Aorta (tissue), 5 donors: ENCODE measurements at regions of chr15 and their contacts with region 1.

Region 1: GRCh38 chr15:34855397-34855796 is 60.0 kb upstream of the ACTC1 start:
- DNase-seq: no peak
- ATAC-seq: peak; percentile 67
- H3K4me3 ChIP-seq: no peak overlapping the region
- H3K27ac ChIP-seq: no peak overlapping the region
- H3K4me1 ChIP-seq: peaks cover 4 to 10% of the 10 kb centered on the region in 2 donors
- H3K27me3 ChIP-seq: no peaks in the 10 kb centered on the region

Region 2: DNA sequence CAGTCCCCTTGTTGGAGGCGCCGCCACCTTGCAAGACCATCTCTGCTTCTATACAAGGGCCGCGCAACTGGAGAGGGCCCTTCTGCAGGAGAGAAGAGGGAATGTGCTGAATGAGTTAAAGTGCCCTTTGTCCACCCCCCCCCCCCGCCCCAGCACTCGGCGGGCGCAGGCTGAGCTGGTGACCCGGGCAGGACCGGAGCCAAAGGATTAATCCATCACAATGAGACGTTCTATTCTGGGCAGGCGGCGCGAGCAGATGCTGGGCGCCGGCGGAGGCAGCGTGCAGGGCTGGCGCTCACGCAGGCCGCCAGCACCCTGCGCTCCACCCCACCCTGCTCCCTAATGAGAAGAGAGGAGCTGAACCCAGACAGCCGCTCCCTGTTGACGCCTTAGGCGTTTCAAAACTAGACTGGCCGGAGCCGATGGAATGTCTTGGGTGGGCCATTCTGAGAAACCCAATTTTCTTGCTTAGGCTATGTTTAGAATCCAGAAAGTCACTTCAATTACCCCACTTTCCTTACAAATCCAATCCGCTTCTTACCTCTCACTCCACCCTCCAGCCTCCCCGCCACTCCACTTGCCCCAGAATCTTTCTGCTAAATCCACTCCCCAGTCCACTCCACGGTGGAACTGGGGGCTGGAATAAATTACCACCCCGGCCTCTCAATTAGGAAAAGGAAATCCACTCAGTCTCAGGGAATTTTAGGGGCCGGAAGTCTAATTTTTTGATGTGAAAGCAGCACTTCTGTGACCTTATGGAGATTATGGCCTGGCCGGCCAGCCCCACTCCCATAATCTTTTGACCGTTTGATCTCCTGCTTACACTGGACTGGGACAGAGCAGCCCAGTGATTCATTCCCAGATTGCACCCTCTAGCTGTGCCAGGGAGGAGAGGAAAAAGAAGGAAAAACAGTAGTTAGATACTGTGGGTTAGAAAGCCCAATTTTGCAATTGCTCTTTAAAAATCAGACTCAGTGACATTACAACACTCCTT is 133.3 kb before region 1 on chr15:
- intact Hi-C with region 1: loop called in 1 of 2 experiments (anchors 5 kb)
- DNase-seq: peak; percentile 84 to 92
- ATAC-seq: peak; percentile 93
- H3K4me3 ChIP-seq: no peak overlapping the region
- H3K27ac ChIP-seq: peak overlapping the region; percentile 10 to 63
- H3K4me1 ChIP-seq: peaks cover 2 to 15% of the 10 kb centered on the region in 2 donors
- H3K27me3 ChIP-seq: no peaks in the 10 kb centered on the region

Region 3: DNA sequence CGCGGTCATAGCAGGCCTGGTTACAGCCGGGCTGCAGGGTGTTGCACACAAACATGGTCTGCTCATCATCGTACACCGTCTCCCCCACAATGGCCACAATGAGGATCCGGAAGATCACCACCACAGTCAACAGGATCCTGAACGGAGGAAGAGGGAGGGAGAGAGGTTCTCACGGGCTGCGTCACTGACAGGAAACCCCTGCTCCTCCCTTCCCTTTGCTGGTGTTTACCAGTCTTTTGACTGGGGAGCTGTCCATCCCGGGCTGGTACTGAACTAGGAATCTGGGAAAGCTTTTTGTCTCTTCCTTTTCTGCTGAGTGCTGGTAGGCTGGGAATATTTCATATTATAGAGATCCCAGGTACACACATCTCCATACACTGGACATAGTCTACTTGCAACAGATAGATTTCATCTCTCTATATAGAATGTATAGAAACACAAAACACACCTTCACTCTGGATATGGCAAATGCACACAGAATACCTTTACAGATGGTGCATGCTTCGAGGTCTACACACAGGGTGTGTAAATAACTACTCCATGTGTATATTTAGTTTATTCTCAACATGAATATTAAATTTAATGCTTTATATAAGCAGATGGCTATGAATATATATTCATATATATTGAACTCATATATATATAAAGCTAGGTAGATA is 102.0 kb before region 1 on chr15:
- intact Hi-C with region 1: no loop called
- DNase-seq: peak; percentile 52 to 81
- ATAC-seq: no peak
- H3K4me3 ChIP-seq: no peak overlapping the region
- H3K27ac ChIP-seq: no peak overlapping the region
- H3K4me1 ChIP-seq: no peaks in the 10 kb centered on the region
- H3K27me3 ChIP-seq: peaks cover 0 to 3% of the 10 kb centered on the region in 2 donors

Region 4: DNA sequence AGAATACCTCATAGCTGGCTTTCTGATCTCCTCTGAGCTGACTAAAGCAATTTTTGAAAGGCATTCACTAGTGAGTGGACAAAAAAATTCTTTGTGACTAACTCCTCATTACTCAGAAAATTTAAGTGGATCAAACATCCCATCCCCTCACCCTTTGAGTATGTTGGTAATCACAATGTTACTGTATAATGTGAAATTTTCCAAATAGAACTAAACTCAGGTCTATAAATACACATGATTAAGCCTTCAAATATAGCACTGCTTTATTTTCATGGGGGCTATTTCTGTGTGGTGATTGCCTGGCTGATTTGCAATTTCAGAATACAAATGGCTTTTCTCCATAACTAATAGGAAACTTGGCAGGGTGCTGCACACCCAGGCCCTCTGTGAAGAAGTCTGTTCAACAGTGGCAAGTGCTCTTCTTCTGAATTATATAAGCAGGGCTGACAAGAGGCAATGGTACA is 14.1 kb before region 1 on chr15:
- intact Hi-C with region 1: loop called in 1 of 2 experiments (anchors 2 kb)
- DNase-seq: no peak
- ATAC-seq: peak; percentile 55
- H3K4me3 ChIP-seq: no peak overlapping the region
- H3K27ac ChIP-seq: no peak overlapping the region
- H3K4me1 ChIP-seq: peaks cover 1 to 4% of the 10 kb centered on the region in 2 donors
- H3K27me3 ChIP-seq: no peaks in the 10 kb centered on the region

Region 5: DNA sequence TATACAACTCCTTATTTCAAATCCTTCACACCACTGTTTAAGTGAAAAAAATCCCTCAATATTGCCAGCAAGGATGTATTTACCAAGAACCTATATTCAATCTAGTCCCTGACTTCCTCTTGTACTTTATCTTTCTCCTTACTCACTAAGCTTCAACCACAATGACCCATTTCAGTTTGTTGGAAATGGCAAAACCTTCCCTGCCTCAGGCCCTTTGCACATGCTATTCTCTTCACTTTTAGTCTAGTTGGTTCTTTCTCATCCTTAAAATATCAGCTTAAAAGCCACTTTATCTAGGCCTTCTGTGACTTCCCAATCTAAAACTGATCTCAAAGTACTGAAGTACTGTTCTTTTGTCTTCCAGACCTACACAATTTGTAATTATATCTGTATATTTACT is 21.2 kb after region 1 on chr15:
- intact Hi-C with region 1: loop called in 1 of 2 experiments (anchors 2 kb)
- DNase-seq: no peak
- ATAC-seq: no peak
- H3K4me3 ChIP-seq: no peak overlapping the region
- H3K27ac ChIP-seq: no peak overlapping the region
- H3K4me1 ChIP-seq: no peaks in the 10 kb centered on the region
- H3K27me3 ChIP-seq: no peaks in the 10 kb centered on the region

Region 6: DNA sequence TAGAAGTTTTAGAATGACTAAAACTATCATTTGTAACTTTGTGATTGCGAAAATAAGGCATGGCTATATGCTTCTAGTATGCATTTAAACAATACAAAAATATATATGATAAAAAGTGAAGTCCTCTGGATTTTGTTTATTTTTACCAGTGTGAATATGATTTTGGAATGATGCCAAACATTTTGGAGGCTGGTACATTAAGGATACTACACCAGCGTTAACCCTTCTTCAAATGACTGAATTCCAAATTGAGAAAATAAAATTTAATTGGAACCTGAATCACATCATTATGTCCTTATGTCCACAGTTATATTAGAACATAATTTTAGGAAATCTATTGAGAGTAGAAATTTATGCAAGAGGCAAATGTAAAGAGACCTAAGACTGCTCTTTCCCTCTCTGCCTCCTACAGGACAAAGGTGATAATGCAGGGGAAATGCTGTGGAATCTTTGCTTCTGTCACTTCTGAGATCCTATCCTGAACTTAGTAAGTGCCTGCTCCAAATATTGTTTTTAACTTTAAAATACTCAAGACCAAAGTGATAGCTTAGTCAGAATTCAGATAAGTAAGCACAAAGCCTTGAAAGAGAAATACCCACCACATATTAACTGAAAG is 350.8 kb after region 1 on chr15:
- intact Hi-C with region 1: no loop called
- DNase-seq: no peak
- ATAC-seq: no peak
- H3K4me3 ChIP-seq: no peak overlapping the region
- H3K27ac ChIP-seq: no peak overlapping the region
- H3K4me1 ChIP-seq: no peaks in the 10 kb centered on the region
- H3K27me3 ChIP-seq: no peaks in the 10 kb centered on the region